Psoas muscle (tissue), 8 donors: ENCODE measurements at regions of chrX and their contacts with region 1.

Region 1: GRCh38 chrX:41250867-41251266 is 83.1 kb upstream of the DDX3X start:
- DNase-seq: no peak
- ATAC-seq: no peak
- H3K4me3 ChIP-seq: no peak overlapping the region
- H3K27ac ChIP-seq: no peak overlapping the region
- H3K4me1 ChIP-seq: no peaks in the 10 kb centered on the region
- H3K27me3 ChIP-seq: peaks cover 0 to 21% (median 0%) of the 10 kb centered on the region in 3 donors
- CTCF ChIP-seq: no peak

Region 2: DNA sequence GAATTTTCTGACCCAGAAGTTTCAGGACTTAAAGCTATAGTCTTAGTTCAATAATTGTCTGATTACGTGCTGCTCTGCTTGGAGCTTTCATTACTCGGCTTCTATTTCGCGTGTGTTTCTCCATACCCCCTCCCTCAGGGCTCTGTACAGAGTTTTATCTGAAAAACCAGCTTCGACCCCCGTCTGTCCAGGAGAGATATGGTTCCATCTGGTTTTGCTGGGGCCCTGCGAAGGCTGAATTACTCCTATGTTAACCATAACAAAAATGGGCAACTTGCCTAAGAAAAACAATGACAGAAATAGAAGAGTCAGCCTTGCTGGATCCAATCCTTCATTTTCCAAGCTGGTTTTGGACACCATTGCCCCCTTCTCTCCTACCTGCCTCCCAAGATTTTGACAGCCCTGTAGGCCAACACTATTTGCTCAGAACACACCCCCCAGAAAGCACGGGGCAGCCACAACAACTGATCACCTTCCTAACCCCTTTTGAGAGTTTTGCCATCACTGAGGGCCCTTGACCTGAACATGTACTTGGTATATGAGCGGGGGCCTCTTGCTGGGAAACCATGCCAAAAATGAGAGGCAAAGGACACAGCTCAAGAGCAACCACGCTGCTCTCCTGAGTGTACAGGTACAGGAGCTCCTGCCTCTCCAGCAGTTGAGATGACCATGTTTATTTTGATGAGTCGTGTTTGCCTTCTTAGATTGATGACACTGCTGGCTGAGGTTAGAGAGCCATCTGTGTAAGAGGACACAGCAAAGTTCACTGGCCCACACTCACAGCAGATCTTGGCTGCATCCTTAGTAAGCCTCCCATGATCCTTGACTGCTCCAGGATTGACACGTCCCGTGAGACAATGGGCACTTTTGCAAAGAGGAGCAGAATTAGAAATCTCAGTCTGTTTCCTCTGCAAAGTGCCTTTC is 706.3 kb before region 1 on chrX:
- intact Hi-C with region 1: loop called (anchors 5 to 10 kb)
- DNase-seq: no peak
- ATAC-seq: peak in 3 of 4 donors; percentile 32 to 54 (median 36)
- H3K4me3 ChIP-seq: peak overlapping the region; percentile 1
- H3K27ac ChIP-seq: no peak overlapping the region
- H3K4me1 ChIP-seq: no peaks in the 10 kb centered on the region
- H3K27me3 ChIP-seq: peaks cover 0 to 30% (median 0%) of the 10 kb centered on the region in 3 donors
- CTCF ChIP-seq: no peak

Region 3: DNA sequence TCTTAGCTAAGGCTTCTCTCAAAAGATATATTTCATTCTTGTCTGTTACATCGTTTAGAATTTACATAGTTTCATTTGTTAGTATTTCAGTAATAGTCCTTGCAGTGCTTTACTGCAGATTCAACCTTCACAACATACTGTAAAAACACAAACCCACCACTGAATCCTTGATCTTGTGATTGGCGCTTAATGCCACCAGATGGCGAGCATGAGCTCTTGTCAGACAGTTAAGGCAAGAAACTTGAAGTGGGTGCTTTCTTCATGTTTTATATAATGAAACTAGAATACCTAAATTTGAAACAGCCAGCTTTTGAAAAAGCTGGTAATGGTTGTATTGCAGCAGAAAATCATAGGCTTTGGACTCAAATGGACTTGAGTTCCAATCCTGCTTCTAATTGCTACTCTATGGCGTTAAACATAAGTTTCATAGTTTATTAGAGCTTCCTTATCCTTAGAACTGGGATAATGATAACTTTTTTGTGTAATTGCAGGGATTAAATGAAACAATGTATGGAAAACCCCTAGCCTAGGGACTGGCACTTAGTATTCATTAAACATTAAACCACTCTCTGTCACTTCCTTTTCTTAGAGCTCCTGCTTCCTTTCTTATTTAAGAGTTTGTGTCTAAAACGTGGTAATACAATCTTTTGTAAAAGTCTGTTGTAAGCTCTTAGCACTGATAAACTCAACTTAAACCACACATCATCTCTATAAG is 70.5 kb before region 1 on chrX:
- intact Hi-C with region 1: loop called in 1 of 2 experiments (anchors 5 kb)
- DNase-seq: peak in 1 of 2 donors; percentile 31
- ATAC-seq: peak in 2 of 4 donors; percentile 57 to 73
- H3K4me3 ChIP-seq: no peak overlapping the region
- H3K27ac ChIP-seq: no peak overlapping the region
- H3K4me1 ChIP-seq: no peaks in the 10 kb centered on the region
- H3K27me3 ChIP-seq: no peaks in the 10 kb centered on the region
- CTCF ChIP-seq: peak; percentile 72